Dendritic cell treated with granulocyte-macrophage colony-stimulating factor and Interleukin-4, amounts not matched to agents 40 ng/mL and 50 ng/mL, for 4 days (primary cell): ENCODE measurements at regions of chr11 and their contacts with region 1.

Region 1: DNA sequence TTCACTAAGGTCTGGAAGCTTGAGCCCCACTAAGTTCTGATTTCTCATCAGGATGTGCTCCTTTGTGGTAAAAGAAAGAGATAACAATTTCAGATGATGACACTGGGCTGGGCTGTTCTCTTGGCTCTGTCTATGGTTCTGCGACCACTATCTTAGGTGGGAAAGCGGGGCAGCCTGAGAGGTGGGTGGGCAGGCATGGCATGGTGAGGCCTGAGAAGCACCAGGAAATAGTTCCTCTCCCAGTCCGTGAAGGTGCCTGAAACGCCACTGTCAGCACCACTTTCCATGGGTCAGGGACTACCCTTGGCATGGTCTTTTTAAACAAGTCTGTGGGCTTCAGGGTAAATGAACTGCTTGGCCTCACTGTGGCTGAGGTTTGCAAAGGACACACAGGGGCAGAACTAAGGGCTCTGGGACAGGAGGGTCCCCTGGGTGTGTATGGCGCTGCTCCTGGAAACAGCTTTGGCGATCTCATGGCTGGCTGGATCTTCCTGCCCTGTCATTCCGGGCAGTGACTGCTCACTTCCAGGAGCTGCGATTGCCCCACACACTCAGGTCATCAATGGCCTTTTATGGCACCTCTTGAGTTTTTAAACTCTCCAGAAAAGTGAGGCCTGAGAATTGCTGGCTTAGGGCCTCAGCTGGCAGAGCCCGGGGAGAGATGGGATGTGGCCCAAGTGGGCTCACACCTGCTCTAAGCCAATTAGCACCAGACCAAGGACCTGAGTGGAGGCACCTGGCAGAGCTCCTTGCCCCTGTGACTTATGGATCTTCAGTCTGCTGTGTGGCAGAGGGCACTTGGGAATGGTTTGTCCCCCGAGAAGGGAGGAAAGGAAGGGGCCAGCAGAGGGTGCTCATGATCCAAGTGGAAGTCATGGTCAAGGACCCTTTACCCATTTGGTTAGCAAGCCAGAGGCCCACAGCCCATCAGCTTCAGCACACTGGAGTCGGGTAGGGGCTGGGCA is 55.6 kb upstream of the LYVE1 start:
- H3K4me3 Mint-ChIP-seq: no peak overlapping the region
- H3K27ac Mint-ChIP-seq: peak overlapping the region; percentile 54
- H3K4me1 Mint-ChIP-seq: peaks cover 38% of the 10 kb centered on the region
- H3K27me3 Mint-ChIP-seq: peaks cover 26% of the 10 kb centered on the region

Region 2: DNA sequence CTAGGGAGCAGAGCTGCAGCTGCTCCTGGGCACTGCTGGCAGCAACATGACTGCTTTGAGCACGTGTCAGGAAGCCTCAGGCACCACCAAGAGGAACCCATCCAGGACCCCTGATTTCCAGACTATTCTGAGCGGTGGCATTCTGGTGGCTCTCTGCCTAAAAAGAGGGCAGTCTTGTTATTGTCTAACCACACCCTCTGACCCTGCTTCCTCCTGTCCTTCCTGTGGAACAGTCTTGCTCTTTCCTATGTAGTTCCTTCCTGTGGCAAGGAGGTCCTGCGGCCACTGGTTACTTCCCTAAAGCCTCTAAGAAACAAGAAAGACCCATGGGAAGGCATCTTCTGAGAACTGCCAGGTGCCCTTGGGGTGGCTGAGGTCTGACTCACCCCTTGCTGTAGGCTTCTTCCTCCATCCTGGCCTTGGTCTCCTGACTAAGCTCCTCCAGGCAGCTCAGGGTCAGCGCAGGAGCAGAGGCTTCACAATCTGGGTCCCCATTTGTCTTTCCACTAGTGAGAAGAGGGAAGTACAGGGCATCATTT is 42.5 kb before region 1 on chr11:
- intact Hi-C with region 1: loop called (anchors 5 kb)
- H3K4me3 Mint-ChIP-seq: no peak overlapping the region
- H3K27ac Mint-ChIP-seq: peak overlapping the region; percentile 59
- H3K4me1 Mint-ChIP-seq: peaks cover 47% of the 10 kb centered on the region
- H3K27me3 Mint-ChIP-seq: peaks cover 19% of the 10 kb centered on the region

Region 3: DNA sequence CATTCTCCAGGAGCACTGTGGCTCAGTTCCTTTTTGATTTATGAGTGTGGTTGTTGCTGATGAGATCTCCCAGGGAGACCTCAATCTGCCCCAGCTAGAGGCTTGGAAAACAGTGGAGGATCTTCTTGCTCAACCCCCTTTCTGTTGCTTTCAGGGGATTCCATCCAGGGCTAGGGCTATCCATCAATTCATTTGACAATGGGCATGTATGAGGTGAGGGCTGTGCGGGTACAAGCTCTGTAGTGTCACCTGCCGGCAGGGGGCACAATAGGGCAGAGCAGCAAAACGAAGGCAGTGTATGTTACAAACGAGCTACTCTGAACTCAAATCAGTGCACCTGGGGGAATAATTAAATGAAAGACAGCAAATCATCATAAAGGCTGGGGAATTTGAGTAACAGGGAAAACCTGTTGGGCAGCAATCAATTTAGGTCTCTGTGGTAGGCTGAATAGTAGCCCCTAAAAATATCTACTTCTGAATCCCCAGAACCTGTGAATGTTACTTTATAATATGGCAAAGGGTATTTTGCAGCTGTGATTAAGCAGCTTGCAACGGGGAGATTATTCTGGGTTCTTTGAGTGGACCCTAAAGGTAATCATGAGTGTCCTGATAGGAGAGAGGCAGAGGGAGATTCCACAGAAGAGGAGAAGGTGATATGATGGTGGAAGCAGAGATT is 404.1 kb after region 1 on chr11:
- intact Hi-C with region 1: no loop called
- H3K4me3 Mint-ChIP-seq: no peak overlapping the region
- H3K27ac Mint-ChIP-seq: no peak overlapping the region
- H3K4me1 Mint-ChIP-seq: peaks cover 12% of the 10 kb centered on the region
- H3K27me3 Mint-ChIP-seq: peaks cover 27% of the 10 kb centered on the region